ENCODE measurements at regions of chr17 and their contacts with region 1.

Region 1: DNA sequence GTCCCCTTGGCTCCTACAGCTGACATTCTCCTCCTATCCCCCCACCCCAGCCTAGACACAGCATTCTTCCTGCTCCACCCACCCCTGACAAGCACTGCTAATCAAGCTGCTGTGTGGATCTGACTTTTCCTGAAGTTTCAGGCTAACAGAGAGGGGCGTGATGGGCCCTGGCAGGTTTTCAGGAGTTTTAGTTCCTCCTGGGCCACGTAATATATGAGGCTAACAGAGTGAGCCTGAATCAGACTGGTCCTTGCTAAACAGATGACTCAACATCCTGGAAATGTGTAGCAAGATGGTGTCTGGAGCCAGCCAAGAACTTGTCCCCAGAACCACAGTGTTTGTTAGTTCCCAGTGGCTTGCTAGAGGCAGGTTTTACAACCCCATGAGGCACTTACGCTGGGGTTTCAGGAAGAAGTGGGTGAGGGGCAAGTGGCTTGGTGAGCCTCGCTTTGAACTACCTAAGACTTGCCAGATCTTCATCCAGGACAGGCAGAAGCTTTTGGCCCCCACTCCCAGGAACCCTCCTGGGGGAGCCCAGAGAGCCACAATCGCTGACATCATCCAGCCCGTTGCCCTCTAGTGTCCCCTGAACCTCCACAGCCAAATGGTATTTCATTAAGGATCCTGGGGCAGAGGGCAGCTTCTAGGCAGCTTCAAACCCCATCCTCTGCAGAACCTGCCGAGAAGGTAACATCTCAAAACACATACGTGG is 15.9 kb downstream of the TMEM92 start:
- DNase-seq: peak; percentile 96
- H3K4me3 ChIP-seq: peak overlapping the region; percentile 55
- H3K27ac ChIP-seq: peak overlapping the region; percentile 97
- H3K27me3 ChIP-seq: no peaks in the 10 kb centered on the region
- CTCF ChIP-seq: no peak

Region 2: DNA sequence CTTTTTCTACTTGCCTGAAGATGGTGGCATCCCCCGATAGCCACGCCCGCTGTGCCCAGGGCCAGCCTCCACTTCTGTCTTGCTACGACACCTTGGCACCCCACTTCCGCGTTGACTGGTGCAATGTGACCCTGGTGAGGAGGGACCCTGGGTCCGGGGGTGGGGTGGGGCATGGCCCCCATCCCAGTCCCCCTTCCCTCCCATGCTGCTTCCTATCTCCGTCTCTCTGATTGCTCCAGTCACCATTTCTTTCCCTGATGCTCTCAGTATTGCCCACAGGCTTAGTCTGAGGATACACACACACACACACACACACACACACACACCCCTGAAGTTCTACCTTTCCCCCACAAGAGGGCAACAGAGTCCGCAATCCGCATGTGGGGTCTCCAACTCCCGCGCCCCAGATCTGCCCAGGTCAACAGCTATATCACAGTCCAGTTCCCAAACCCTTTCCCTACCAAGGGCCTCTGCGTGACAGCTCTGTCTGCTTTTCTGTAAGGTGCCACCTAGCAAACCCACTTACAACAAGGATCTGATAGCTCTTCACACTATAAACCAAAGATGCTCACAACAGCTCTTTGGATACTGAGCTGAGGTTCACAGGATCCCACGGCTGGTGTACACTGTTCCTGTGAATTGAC is 120.9 kb before region 1 on chr17:
- CTCF ChIA-PET with region 1: interaction called, 116 read pairs
- POLR2A ChIA-PET with region 1: interaction called, 4 read pairs
- DNase-seq: no peak
- H3K4me3 ChIP-seq: no peak overlapping the region
- H3K27ac ChIP-seq: no peak overlapping the region
- H3K27me3 ChIP-seq: no peaks in the 10 kb centered on the region
- CTCF ChIP-seq: peak; percentile 98

Region 3: GRCh38 chr17:50184611-50185398 is 105.3 kb before region 1 on chr17:
- CTCF ChIA-PET with region 1: interaction called, 3 read pairs
- POLR2A ChIA-PET with region 1: interaction called, 33 read pairs
- DNase-seq: no peak
- H3K4me3 ChIP-seq: no peak overlapping the region
- H3K27ac ChIP-seq: peak overlapping the region; percentile 98
- H3K27me3 ChIP-seq: no peaks in the 10 kb centered on the region
- CTCF ChIP-seq: no peak

Region 4: GRCh38 chr17:50206604-50207293 is 83.4 kb before region 1 on chr17:
- CTCF ChIA-PET with region 1: interaction called, 11 read pairs
- POLR2A ChIA-PET with region 1: interaction called, 63 read pairs
- DNase-seq: no peak
- H3K4me3 ChIP-seq: peak overlapping the region; percentile 41
- H3K27ac ChIP-seq: peak overlapping the region; percentile 65
- H3K27me3 ChIP-seq: no peaks in the 10 kb centered on the region
- CTCF ChIP-seq: no peak

Measured in AG04450 (cell line).